ENCODE measurements at regions of chr16 and their contacts with region 1.

Region 1: DNA sequence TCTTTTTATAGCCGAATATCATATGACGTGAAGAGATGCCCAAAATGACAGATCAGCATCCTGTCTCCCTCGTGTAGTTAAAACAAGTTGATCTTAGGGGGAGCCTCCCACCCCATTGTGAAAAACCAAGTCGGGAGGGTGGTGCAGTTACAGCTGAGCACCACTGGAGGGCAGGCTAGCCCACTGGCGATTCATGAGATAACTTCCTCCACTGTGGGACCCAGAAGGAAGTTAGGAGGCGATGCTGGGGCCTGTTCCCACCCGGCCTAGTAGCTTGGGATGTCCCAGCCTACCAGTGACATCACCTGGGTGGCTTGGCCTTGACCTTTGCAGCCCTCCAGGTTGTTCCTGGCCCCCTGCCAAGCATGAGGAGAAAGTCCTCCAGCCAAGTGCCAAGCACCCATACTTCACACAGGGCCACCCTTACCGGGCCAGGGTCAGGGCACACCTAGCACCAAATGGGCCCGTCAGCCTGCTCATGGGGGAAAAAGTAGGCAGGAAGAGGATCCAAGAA is 8.1 kb upstream of the CPNE2 start:
- DNase-seq: no peak
- H3K4me3 ChIP-seq: no peak overlapping the region
- H3K27me3 ChIP-seq: no peaks in the 10 kb centered on the region
- CTCF ChIP-seq: peak; percentile 98

Region 2: GRCh38 chr16:56988948-56989945 is 95.1 kb before region 1 on chr16 and contains the start of gene NLRC5:
- CTCF ChIA-PET with region 1: no interaction called
- POLR2A ChIA-PET with region 1: no interaction called
- DNase-seq: no peak
- H3K4me3 ChIP-seq: peak within 1 kb of the TSS; percentile 71
- H3K27me3 ChIP-seq: no peaks in the 10 kb centered on the region
- CTCF ChIP-seq: no peak
- polyA plus RNA-seq, gene NLRC5: 15.4 and 19.2 TPM in 2 replicates

Region 3: DNA sequence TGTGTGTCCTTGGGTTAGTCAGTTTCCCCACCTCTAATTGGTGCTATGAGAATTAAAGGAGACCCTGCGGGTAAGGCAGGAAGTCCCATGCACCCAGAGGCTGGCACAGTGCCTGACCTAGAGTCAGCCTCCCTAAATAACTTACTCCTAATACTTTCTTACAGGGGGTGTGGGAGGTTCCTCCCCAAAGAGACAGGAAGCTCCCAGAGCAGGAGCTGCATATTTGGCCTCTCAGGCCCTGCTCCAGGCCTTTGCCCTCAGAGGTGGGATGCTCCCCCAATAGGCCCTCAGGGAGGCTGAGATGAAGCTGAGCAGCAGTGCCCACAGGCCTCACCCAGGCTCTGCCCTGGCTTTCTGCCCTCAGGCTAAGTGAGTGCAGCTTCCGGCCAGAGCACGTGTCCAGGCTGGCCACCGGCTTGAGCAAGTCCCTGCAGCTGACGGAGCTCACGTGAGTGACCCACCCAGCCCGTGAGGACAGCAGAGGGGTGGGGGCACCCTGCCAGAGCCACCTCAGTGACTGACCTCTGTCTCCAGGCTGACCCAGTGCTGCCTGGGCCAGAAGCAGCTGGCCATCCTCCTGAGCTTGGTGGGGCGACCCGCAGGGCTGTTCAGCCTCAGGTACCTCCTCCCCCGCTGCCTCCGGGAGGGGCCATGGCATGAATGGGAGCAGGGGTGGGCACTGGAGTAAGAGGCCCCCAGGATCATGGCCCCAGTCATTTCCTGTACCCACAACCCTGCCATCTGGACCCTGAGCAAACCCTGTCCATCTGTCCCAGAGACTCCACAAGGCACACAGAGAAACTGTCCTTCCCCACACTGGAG is 23.0 kb before region 1 on chr16:
- CTCF ChIA-PET with region 1: interaction called, 20 read pairs
- POLR2A ChIA-PET with region 1: no interaction called
- DNase-seq: peak; percentile 53
- H3K4me3 ChIP-seq: no peak overlapping the region
- H3K27me3 ChIP-seq: no peaks in the 10 kb centered on the region
- CTCF ChIP-seq: no peak

Region 4: DNA sequence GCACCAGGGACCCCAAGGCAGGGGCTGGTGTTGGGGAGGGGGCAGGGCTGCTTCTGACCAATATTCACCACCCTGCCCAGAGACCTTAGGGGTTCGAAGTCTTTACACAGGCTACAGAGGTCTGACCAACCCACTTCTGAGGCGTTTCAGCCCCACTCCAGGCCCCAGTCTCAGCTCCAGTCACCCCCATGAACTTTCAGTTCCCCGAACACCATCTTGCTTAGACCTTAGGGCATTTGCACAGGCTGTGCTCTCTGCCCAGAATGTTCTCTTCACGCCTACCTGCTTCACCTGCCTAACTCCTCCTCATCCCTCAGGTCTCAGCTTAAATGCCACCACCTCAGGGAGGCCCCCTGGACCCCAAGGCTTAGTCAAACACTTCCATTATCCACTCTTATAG is 17.7 kb before region 1 on chr16:
- CTCF ChIA-PET with region 1: interaction called, 33 read pairs
- POLR2A ChIA-PET with region 1: no interaction called
- DNase-seq: no peak
- H3K4me3 ChIP-seq: no peak overlapping the region
- H3K27me3 ChIP-seq: no peaks in the 10 kb centered on the region
- CTCF ChIP-seq: no peak

Region 5: GRCh38 chr16:57071831-57072582 is 12.3 kb before region 1 on chr16:
- CTCF ChIA-PET with region 1: interaction called, 33 read pairs
- POLR2A ChIA-PET with region 1: no interaction called
- DNase-seq: peak; percentile 53
- H3K4me3 ChIP-seq: no peak overlapping the region
- H3K27me3 ChIP-seq: no peaks in the 10 kb centered on the region
- CTCF ChIP-seq: no peak

Region 6: GRCh38 chr16:57147381-57148221 is 63.3 kb after region 1 on chr16:
- CTCF ChIA-PET with region 1: interaction called, 15 read pairs
- POLR2A ChIA-PET with region 1: no interaction called
- DNase-seq: peak; percentile 67
- H3K4me3 ChIP-seq: no peak overlapping the region
- H3K27me3 ChIP-seq: no peaks in the 10 kb centered on the region
- CTCF ChIP-seq: no peak

Region 7: DNA sequence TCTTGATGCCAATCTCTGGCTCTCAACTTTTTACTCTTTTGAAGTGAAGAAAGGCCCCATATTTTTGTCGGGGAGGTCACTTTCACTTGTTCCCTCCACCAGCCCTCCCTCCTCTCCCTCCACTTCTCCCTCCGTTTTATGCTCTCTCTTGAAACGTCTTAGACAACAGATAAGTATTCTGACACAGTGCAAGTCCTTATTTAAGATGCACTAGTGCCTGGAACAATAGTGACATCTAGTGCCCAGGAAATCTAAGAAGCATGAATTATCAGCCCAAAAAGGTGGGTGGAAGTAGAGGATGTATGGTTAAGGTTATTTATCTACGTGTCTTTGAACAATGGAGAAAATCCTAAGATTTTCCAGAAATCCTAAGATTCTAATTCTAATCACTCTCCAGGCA is 83.6 kb after region 1 on chr16:
- CTCF ChIA-PET with region 1: interaction called, 44 read pairs
- POLR2A ChIA-PET with region 1: interaction called, 4 read pairs
- DNase-seq: no peak
- H3K4me3 ChIP-seq: no peak overlapping the region
- H3K27me3 ChIP-seq: no peaks in the 10 kb centered on the region
- CTCF ChIP-seq: peak; percentile 77

Region 8: DNA sequence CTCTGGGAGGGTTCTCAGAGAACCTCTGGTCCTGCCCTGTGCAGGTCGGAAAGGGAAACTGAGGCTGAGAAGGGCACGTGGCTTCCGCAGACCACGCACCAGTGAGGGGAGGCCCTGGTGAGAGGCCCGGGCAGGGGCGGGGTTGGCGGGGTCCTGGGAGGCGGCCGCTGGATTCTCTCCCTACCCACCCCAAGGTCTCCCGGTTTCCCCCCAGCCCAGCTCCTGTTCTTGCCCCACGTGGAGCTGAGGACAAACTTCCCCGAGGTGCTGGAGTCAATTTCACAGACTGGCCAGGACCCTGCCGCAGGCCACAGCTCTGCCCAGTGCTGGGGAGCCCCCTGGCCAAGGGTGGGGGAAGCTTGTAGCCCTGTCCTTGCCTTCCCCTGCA is 331.8 kb after region 1 on chr16:
- CTCF ChIA-PET with region 1: interaction called, 12 read pairs
- POLR2A ChIA-PET with region 1: no interaction called
- DNase-seq: no peak
- H3K4me3 ChIP-seq: no peak overlapping the region
- H3K27me3 ChIP-seq: peaks cover 4% of the 10 kb centered on the region
- CTCF ChIP-seq: no peak

Measured in BJ (cell line).